Activated CD4-positive, alpha-beta T cell treated with anti-CD3 and anti-CD28 coated beads for 36 hours (primary cell): ENCODE measurements at regions of chr19 and their contacts with region 1.

Region 1: GRCh38 chr19:10695401-10696398 is 5.5 kb upstream of the QTRT1 start:
- DNase-seq: peak; percentile 95
- ATAC-seq: peak; percentile 99
- H3K4me3 Mint-ChIP-seq: peak overlapping the region; percentile 59
- H3K27ac Mint-ChIP-seq: no peak overlapping the region
- H3K4me1 Mint-ChIP-seq: peaks cover 13% of the 10 kb centered on the region
- H3K27me3 Mint-ChIP-seq: no peaks in the 10 kb centered on the region

Region 2: DNA sequence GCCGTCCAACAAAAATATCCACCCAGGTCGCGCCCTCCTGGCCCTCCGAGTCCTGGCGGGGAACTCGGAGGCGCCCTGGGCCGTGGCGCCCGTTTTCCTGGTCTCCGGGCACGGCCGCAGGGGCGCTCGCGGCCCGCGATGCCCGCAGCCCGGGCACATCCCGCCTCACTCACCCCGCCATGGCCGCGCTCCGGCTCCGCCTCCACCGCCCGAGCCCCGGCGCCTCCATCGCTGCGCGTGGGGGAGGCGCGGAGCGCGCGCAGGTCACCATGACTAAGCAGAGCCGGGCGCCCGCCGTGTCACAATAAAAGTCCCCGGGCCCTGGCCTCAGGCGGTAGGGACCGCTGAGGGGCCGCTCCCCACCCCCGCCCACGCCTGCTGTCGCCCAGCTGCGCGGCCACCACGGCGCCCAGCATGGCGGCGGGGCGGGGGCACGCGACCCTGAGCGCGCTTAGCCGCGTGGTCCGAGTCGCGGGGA is 193.1 kb before region 1 on chr19:
- CTCF ChIA-PET with region 1: interaction called, 4 read pairs
- POLR2A ChIA-PET with region 1: interaction called, 3 read pairs
- intact Hi-C with region 1: loop called (anchors 2 to 10 kb)
- DNase-seq: peak; percentile 95
- ATAC-seq: peak; percentile 91
- H3K4me3 Mint-ChIP-seq: peak overlapping the region; percentile 91
- H3K27ac Mint-ChIP-seq: peak overlapping the region; percentile 95
- H3K4me1 Mint-ChIP-seq: peaks cover 30% of the 10 kb centered on the region
- H3K27me3 Mint-ChIP-seq: no peaks in the 10 kb centered on the region

Region 3: DNA sequence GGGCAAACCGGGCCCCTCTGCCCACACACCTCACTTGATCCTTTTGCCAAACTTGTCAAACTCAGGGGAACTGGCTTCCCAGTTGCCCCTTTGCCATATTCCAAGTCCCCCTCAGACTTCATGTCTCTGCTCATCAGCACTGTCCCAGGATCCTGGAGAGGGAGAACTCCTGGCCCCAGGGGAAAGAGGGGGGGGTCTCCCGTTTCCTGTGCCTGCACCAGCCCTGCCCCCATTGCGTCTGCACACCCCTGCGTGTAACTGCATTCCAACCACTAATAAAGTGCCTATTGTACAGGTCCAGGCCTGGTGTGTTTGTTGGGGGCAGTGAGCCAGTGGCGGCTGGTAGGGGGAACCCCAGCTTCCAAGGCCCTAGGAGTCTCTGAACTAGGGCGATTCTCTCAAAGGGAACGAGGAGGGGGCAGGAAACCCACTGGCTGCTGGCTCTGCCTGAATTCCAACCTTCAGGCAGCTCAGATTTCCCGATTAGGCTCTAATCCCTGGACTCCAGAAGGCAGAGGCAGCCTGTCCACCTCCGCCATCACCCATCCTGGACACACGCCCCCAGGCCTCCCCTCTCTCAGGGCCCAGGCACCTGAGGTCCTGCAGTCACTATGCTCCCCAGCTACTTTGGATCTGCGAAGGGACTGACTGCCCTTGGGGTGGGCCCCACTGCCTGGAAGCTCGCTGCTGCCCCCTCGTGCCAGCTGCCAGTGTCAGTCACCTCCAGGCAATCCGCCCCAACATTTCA is 51.3 kb before region 1 on chr19:
- CTCF ChIA-PET with region 1: interaction called, 39 read pairs
- POLR2A ChIA-PET with region 1: no interaction called
- intact Hi-C with region 1: no loop called
- DNase-seq: peak; percentile 91
- ATAC-seq: peak; percentile 87
- H3K4me3 Mint-ChIP-seq: no peak overlapping the region
- H3K27ac Mint-ChIP-seq: no peak overlapping the region
- H3K4me1 Mint-ChIP-seq: peaks cover 30% of the 10 kb centered on the region
- H3K27me3 Mint-ChIP-seq: no peaks in the 10 kb centered on the region

Region 4: GRCh38 chr19:10670182-10670581 is 25.5 kb before region 1 on chr19:
- CTCF ChIA-PET with region 1: interaction called, 10 read pairs
- POLR2A ChIA-PET with region 1: interaction called, 4 read pairs
- intact Hi-C with region 1: no loop called
- DNase-seq: no peak
- ATAC-seq: no peak
- H3K4me3 Mint-ChIP-seq: no peak overlapping the region
- H3K27ac Mint-ChIP-seq: peak overlapping the region; percentile 31
- H3K4me1 Mint-ChIP-seq: peaks cover 28% of the 10 kb centered on the region
- H3K27me3 Mint-ChIP-seq: no peaks in the 10 kb centered on the region

Region 5: GRCh38 chr19:10769533-10770491 is 74.1 kb after region 1 on chr19:
- CTCF ChIA-PET with region 1: no interaction called
- POLR2A ChIA-PET with region 1: no interaction called
- intact Hi-C with region 1: no loop called
- DNase-seq: peak; percentile 28
- ATAC-seq: no peak
- H3K4me3 Mint-ChIP-seq: no peak overlapping the region
- H3K27ac Mint-ChIP-seq: peak overlapping the region; percentile 13
- H3K4me1 Mint-ChIP-seq: peaks cover 17% of the 10 kb centered on the region
- H3K27me3 Mint-ChIP-seq: no peaks in the 10 kb centered on the region